HepG2 (cell line): ENCODE measurements at regions of chr15 and their contacts with region 1.

Region 1: DNA sequence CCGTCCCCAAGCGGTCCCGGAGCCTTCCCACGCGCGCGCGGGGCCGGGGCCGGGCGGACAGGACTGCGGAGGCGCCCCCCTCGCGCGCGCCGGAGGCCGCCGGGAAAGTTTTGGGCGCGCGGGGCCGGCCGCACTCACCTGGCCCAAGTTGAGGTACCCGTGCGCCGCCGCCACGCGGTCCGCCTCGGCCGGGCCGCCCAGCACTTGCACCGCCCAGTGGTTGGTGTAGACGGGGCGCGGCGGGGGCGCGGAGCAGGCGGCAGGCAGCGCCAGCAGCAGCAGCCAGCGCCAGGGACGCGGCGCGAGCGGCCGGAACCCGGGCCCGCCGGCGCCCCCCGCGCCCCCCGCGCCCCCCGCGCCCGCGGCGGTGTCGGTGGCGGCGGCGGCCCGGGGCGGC is 273 bp downstream of the PCSK6 start:
- DNase-seq: no peak
- ATAC-seq: peak; percentile 43
- H3K4me3 ChIP-seq: peak overlapping the region; percentile 62 to 83 (median 83); a peak in 4 of 6 replicates
- H3K27ac ChIP-seq: no peak overlapping the region
- H3K4me1 ChIP-seq: peaks cover 44% of the 10 kb centered on the region
- H3K27me3 ChIP-seq: no peaks in the 10 kb centered on the region
- CTCF ChIP-seq: peak; percentile 33; the same call in 1 of the 2 replicates
- EP300 ChIP-seq: no peak
- POLR2A ChIP-seq: no peak
- RAD21 ChIP-seq: peak; percentile 25

Region 2: DNA sequence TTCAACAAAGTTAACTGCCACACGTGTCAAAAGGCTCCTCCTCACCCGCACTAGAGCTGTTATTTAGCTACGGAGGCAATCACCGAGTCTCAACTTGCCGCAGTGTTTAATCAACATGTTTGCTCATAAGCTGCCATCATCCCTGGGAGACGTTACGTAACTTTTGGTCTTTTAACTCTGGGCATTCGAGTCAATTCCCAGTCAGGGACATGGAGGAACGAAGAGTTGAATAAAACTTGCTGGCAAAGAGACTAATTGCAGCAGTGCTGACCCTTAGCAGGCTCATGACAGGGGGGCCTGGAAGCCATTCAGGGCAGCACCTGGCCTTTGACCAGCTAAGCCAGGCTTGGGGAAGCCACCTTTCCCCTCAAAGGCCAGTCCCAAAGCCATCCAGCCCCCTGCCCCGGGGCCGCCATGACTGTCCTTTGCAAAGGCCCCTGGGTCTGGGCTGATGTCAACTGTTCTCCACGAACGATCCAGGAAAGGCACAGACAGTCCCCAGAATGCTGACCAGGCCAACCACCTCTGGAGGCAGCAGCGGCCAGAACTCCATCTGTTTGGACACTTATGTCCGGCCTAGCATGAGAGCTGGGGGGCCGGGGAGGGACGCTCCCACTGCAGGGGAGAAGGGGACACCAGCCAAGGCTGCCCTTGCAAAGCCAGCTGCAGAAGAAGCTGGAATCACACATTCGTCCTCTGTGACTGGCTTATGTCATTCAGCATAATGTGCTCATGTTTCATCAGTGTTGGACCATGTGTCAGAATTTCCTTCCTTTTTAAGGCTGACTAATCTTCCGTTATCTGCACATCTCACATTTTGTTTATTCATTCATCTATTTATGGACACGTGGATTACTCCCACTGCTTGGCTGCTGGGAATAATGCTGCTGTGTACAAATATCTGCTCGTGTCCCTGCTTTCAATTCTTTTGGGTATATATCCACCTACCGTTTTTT is 43.4 kb before region 1 on chr15:
- CTCF ChIA-PET with region 1: no interaction called
- POLR2A ChIA-PET with region 1: interaction called, 11 read pairs
- in situ Hi-C with region 1: no loop called
- intact Hi-C with region 1: loop called (anchors 2 kb)
- DNase-seq: peak; percentile 87
- ATAC-seq: peak; percentile 53
- H3K4me3 ChIP-seq: peak overlapping the region in 1 of 3 experiments; percentile 32; a peak in 2 of 6 replicates
- H3K27ac ChIP-seq: peak overlapping the region; percentile 86
- H3K4me1 ChIP-seq: peaks cover 71% of the 10 kb centered on the region
- H3K27me3 ChIP-seq: no peaks in the 10 kb centered on the region
- CTCF ChIP-seq: no peak
- EP300 ChIP-seq: peak in 1 of 2 experiments; percentile 87; a peak in 2 of 4 replicates
- POLR2A ChIP-seq: peak; percentile 32 to 46; a peak in 2 of 4 replicates
- RAD21 ChIP-seq: no peak